PC-9 (cell line): ENCODE measurements at regions of chr21 and their contacts with region 1.

Region 1: GRCh38 chr21:44368711-44369446 is 15.5 kb downstream of the TRPM2 start:
- DNase-seq: no peak
- H3K4me3 ChIP-seq: no peak overlapping the region
- H3K27ac ChIP-seq: no peak overlapping the region
- H3K4me1 ChIP-seq: no peaks in the 10 kb centered on the region
- H3K27me3 ChIP-seq: peaks cover 68% of the 10 kb centered on the region
- CTCF ChIP-seq: no peak

Region 2: GRCh38 chr21:44444286-44444931 is 75.5 kb after region 1 on chr21:
- CTCF ChIA-PET with region 1: no interaction called
- POLR2A ChIA-PET with region 1: no interaction called
- intact Hi-C with region 1: no loop called
- DNase-seq: no peak
- H3K4me3 ChIP-seq: no peak overlapping the region
- H3K27ac ChIP-seq: no peak overlapping the region
- H3K4me1 ChIP-seq: no peaks in the 10 kb centered on the region
- H3K27me3 ChIP-seq: peaks cover 72% of the 10 kb centered on the region
- CTCF ChIP-seq: peak; percentile 36; the same call in 1 of the 2 replicates

Region 3: GRCh38 chr21:44723177-44724131 is 354.6 kb after region 1 on chr21:
- CTCF ChIA-PET with region 1: no interaction called
- POLR2A ChIA-PET with region 1: no interaction called
- intact Hi-C with region 1: no loop called
- DNase-seq: no peak
- H3K4me3 ChIP-seq: no peak overlapping the region
- H3K27ac ChIP-seq: no peak overlapping the region
- H3K4me1 ChIP-seq: no peaks in the 10 kb centered on the region
- H3K27me3 ChIP-seq: peaks cover 71% of the 10 kb centered on the region
- CTCF ChIP-seq: no peak

Region 4: GRCh38 chr21:44836666-44837471 is 468.0 kb after region 1 on chr21:
- CTCF ChIA-PET with region 1: interaction called, 12 read pairs
- POLR2A ChIA-PET with region 1: no interaction called
- intact Hi-C with region 1: no loop called
- DNase-seq: peak; percentile 49 to 63
- H3K4me3 ChIP-seq: no peak overlapping the region
- H3K27ac ChIP-seq: no peak overlapping the region
- H3K4me1 ChIP-seq: no peaks in the 10 kb centered on the region; the same call in 1 of the 2 replicates
- H3K27me3 ChIP-seq: no peaks in the 10 kb centered on the region
- CTCF ChIP-seq: no peak